ENCODE measurements at regions of chr7 and their contacts with region 1.

Region 1: DNA sequence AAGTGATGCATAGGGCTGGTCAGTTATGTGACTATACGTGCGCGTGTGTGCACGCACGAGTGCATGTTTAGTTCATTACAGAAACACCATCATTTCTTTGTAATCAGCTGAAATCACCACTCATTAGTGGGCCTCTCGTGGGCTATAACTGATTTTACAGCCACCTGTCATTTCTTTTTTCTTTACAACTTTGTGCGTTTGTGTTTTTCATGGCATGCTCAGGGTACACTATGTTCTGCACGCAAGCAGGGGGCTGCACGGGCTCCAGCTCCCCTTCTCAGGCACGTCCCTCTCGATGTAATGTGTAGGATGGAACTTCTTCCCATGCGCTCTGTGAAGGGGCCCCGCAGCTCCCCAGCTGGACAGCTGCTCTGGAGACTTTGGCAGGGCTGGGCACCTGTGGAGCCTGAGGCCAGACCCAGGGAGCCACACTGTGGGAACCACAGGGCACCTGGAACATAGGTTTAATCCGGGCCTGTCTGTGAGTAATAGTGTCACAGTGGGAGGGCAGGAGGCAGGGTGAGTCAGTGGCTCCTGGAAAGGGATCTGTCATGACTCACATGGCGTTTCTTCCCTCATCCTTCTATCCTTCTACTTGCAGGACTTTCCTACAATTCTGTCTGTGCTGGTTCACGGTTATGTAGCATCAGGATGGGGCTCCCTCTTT is 4.9 kb downstream of the GCK start:
- DNase-seq: no peak
- ATAC-seq: no peak

Region 2: GRCh38 chr7:44072364-44073231 is 111.7 kb before region 1 on chr7:
- intact Hi-C with region 1: loop called (anchors 10 kb)
- DNase-seq: peak; percentile 87
- ATAC-seq: peak; percentile 53

Region 3: GRCh38 chr7:44087911-44088838 is 96.2 kb before region 1 on chr7:
- intact Hi-C with region 1: no loop called
- DNase-seq: peak; percentile 86
- ATAC-seq: peak; percentile 87

Measured in sciatic nerve (tissue), 2 donors.